Heart left ventricle (tissue), 16 donors: ENCODE measurements at regions of chr2 and their contacts with region 1.

Region 1: GRCh38 chr2:126534478-126534877 is 121.5 kb upstream of the GYPC start:
- DNase-seq: peak in 4 of 5 donors; percentile 40 to 64 (median 46)
- ATAC-seq: peak; percentile 39 to 97 (median 72)
- H3K4me3 ChIP-seq: no peak overlapping the region
- H3K27ac ChIP-seq: peak overlapping the region in 7 of 12 donors; percentile 37 to 65 (median 39)
- H3K4me1 ChIP-seq: peaks cover 0 to 17% (median 0%) of the 10 kb centered on the region in 12 donors
- H3K27me3 ChIP-seq: no peaks in the 10 kb centered on the region
- CTCF ChIP-seq: no peak
- POLR2A ChIP-seq: no peak

Region 2: GRCh38 chr2:126429103-126429502 is 105.4 kb before region 1 on chr2:
- intact Hi-C with region 1: no loop called
- DNase-seq: no peak
- ATAC-seq: no peak
- H3K4me3 ChIP-seq: no peak overlapping the region
- H3K27ac ChIP-seq: no peak overlapping the region
- H3K4me1 ChIP-seq: no peaks in the 10 kb centered on the region
- H3K27me3 ChIP-seq: no peaks in the 10 kb centered on the region
- CTCF ChIP-seq: no peak
- POLR2A ChIP-seq: no peak

Region 3: DNA sequence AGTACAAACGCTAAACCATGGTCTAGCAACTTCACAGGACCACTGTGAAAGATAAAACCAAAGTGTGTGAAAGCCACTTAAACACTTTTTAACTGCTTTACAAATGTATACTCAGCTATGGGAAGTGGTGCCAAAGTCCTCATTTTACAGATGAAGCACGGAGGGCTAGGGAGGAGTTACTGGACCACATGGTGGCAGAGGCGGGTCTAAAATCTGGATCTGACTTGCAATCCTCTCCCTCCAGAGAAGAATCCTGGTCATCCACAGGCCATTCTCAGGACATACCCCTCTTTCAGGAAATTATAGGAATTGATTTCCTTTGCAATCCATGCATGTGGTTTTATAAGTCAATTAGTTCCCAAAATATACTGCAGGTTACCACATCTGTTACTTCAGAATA is 36.9 kb after region 1 on chr2:
- intact Hi-C with region 1: loop called in 1 of 10 experiments (anchors 1 kb)
- DNase-seq: no peak
- ATAC-seq: no peak
- H3K4me3 ChIP-seq: no peak overlapping the region
- H3K27ac ChIP-seq: no peak overlapping the region
- H3K4me1 ChIP-seq: no peaks in the 10 kb centered on the region
- H3K27me3 ChIP-seq: no peaks in the 10 kb centered on the region
- CTCF ChIP-seq: no peak
- POLR2A ChIP-seq: no peak

Region 4: GRCh38 chr2:126586317-126586716 is 51.8 kb after region 1 on chr2:
- intact Hi-C with region 1: loop called in 2 of 10 experiments (anchors 5 kb)
- DNase-seq: peak in 4 of 5 donors; percentile 46 to 59 (median 50)
- ATAC-seq: peak; percentile 84 to 98 (median 90)
- H3K4me3 ChIP-seq: no peak overlapping the region
- H3K27ac ChIP-seq: peak overlapping the region in 11 of 12 donors; percentile 8 to 81 (median 71)
- H3K4me1 ChIP-seq: peaks cover 0 to 14% (median 0%) of the 10 kb centered on the region in 12 donors
- H3K27me3 ChIP-seq: no peaks in the 10 kb centered on the region
- CTCF ChIP-seq: no peak
- POLR2A ChIP-seq: no peak

Region 5: DNA sequence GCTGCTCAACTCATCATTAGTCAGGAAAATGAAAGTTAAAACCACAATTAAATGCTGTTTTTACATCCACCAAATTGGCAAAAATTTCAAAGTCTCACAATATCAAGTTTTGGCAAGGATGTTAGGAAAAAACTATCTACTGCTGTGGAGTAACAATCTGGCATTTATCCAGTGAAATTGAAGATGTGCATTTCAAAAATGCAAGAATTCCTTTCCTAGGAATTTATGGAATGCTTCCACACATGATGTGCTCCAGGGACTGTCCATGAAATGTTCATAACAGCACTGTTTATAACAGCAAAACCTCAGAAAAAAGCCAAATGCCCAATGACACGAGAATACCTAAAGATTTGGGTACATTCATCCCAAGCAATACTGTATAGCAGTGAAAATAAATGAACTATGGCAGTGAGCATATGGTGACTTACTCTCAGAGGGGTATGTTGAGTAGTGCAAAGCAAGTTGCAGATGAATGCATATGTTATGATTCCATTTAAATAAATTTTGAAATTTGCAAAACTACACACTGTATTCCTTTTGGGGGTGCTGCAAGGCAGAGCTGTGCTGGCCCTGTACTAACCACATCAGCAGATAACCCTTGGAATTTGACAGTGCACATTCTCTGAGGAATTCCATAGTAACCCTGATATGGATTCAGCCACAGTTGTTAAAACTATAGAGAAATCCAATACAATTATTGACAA is 80.2 kb after region 1 on chr2:
- intact Hi-C with region 1: no loop called
- DNase-seq: no peak
- ATAC-seq: no peak
- H3K4me3 ChIP-seq: no peak overlapping the region
- H3K27ac ChIP-seq: no peak overlapping the region
- H3K4me1 ChIP-seq: peaks cover 0 to 12% (median 6%) of the 10 kb centered on the region in 12 donors
- H3K27me3 ChIP-seq: no peaks in the 10 kb centered on the region
- CTCF ChIP-seq: peak in 2 of 12 donors; percentile 9 to 18
- POLR2A ChIP-seq: no peak

Region 6: DNA sequence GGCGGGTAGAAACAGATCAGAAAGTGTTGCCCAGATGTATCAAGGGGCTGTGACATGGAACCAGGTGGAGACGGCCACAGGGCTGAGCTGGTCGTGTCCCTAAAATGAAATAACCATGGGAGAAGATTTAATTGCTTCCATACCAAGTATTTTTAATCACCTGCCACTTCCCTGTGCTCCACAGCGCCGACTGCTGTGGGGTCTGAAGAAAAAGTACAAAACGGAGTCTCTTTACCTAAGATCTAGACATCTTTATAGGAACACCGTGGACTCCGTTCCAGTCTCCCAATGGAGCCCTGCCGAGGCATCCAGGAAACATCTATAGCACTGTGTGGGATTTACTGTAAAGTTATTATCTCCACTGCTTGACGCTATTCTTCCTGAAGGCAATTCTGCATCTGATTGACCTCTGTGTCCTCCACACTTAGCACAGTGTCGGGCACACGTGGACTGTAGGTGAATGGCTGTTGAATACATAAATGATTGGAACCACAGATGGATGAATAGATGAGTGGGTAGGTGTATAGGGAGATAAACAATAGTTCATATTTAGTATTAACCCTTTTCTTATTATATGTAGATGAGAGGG is 99.9 kb after region 1 on chr2:
- intact Hi-C with region 1: loop called in 2 of 10 experiments (anchors 5 to 10 kb)
- DNase-seq: peak in 1 of 5 donors; percentile 33
- ATAC-seq: no peak
- H3K4me3 ChIP-seq: no peak overlapping the region
- H3K27ac ChIP-seq: no peak overlapping the region
- H3K4me1 ChIP-seq: peaks cover 0 to 16% (median 4%) of the 10 kb centered on the region in 12 donors
- H3K27me3 ChIP-seq: no peaks in the 10 kb centered on the region
- CTCF ChIP-seq: peak in 11 of 12 donors; percentile 8 to 53 (median 33)
- POLR2A ChIP-seq: no peak

Region 7: GRCh38 chr2:126644630-126645191 is 110.2 kb after region 1 on chr2:
- intact Hi-C with region 1: loop called in 3 of 10 experiments (anchors 5 to 10 kb)
- DNase-seq: peak in 1 of 5 donors; percentile 22
- ATAC-seq: peak in 2 of 4 donors; percentile 9 to 37
- H3K4me3 ChIP-seq: no peak overlapping the region
- H3K27ac ChIP-seq: no peak overlapping the region
- H3K4me1 ChIP-seq: no peaks in the 10 kb centered on the region
- H3K27me3 ChIP-seq: no peaks in the 10 kb centered on the region
- CTCF ChIP-seq: no peak
- POLR2A ChIP-seq: no peak